H1 (cell line): ENCODE measurements at regions of chr6 and their contacts with region 1.

Region 1: GRCh38 chr6:144265390-144265789 is 19.7 kb upstream of the UTRN start:
- DNase-seq: no peak
- H3K4me3 ChIP-seq: peak overlapping the region in 1 of 4 experiments; percentile 49; a peak in 3 of 8 replicates
- H3K27ac ChIP-seq: no peak overlapping the region
- H3K4me1 ChIP-seq: peaks cover 0 to 14% (median 10%) of the 10 kb centered on the region in 4 experiments; a peak in 4 of 7 replicates
- H3K27me3 ChIP-seq: no peaks in the 10 kb centered on the region
- CTCF ChIP-seq: no peak
- EP300 ChIP-seq: no peak
- POLR2A ChIP-seq: no peak
- RAD21 ChIP-seq: 0 out of 4 replicates have a peak, but pooled peaks of 1 of the 2 experiments have one; percentile 0

Region 2: DNA sequence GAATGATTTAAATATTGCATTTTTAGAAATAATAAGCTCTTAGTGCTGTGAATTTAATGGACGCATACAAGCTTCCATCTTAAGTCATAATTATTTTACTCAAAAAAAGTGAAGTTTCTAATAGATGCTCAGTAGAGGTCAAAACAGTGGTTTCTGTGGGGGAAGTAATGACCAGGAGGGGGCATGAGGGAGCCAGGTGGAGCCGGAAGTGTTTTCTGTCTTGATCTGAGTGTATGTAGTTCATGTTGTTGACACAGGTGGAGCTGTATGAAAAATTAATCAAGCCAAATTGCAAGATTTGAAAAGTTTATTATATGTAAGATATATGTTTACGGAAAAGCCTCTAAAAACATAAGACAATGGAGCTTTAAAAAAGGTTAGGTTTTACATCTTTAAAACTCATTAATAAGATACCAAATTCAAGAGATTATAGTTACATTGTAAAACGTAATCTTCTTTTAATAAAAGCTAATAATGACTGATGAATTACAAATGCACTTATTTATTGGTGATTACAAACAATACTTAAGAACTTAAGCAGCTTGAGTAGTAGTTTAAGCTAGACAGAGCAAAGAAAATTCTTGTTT is 325.3 kb before region 1 on chr6:
- CTCF ChIA-PET with region 1: no interaction called
- POLR2A ChIA-PET with region 1: no interaction called
- DNase-seq: no peak
- H3K4me3 ChIP-seq: no peak overlapping the region
- H3K27ac ChIP-seq: no peak overlapping the region
- H3K4me1 ChIP-seq: peaks cover 2 to 18% (median 9%) of the 10 kb centered on the region in 4 experiments; a peak in 5 of 7 replicates
- H3K27me3 ChIP-seq: no peaks in the 10 kb centered on the region; a peak in 1 of 7 replicates
- CTCF ChIP-seq: peak; percentile 70 to 98 (median 79)
- EP300 ChIP-seq: no peak
- POLR2A ChIP-seq: no peak
- RAD21 ChIP-seq: peak; percentile 68 to 77

Region 3: DNA sequence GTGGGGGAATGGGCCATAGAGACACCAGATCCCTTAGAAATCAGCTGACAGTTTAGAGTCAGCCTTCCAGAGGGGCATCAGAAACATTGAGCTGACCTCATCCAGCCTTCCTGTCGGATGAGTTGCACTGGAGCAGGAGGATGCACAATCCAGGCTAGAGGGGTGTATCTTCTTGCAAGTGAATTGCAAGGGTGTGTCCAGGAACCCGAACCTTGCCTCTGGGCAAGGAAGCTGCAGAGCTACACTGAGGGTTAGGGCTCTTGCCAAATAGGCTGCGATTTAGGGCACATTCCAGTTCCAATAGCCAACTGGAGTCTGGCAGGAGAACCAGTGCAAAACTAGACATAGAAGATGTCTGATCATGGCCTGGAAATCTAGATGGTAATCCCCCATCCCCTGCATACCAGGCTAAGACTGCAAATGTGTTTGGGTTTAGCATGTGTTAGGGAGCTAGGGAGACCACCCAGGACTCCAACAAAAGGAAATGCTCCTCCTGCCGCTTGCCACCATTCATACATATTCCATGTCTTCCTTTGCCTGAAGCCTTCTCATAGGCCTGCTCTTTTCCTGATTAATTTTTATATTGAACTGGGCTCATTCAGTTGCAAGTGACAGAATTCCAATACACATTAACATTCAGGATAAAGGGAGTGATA is 13.4 kb after region 1 on chr6:
- CTCF ChIA-PET with region 1: interaction called, 12 read pairs
- POLR2A ChIA-PET with region 1: interaction called, 5 read pairs
- DNase-seq: no peak
- H3K4me3 ChIP-seq: no peak overlapping the region
- H3K27ac ChIP-seq: no peak overlapping the region
- H3K4me1 ChIP-seq: peaks cover 4 to 15% (median 8%) of the 10 kb centered on the region in 4 experiments; a peak in 6 of 7 replicates
- H3K27me3 ChIP-seq: no peaks in the 10 kb centered on the region
- CTCF ChIP-seq: no peak
- EP300 ChIP-seq: no peak
- POLR2A ChIP-seq: no peak
- RAD21 ChIP-seq: no peak

Region 4: GRCh38 chr6:144311361-144311760 is 46.0 kb after region 1 on chr6:
- CTCF ChIA-PET with region 1: no interaction called
- POLR2A ChIA-PET with region 1: no interaction called
- DNase-seq: no peak
- H3K4me3 ChIP-seq: no peak overlapping the region
- H3K27ac ChIP-seq: no peak overlapping the region
- H3K4me1 ChIP-seq: peaks cover 0 to 3% (median 0%) of the 10 kb centered on the region in 4 experiments; a peak in 1 of 7 replicates
- H3K27me3 ChIP-seq: no peaks in the 10 kb centered on the region
- CTCF ChIP-seq: no peak
- EP300 ChIP-seq: no peak
- POLR2A ChIP-seq: no peak
- RAD21 ChIP-seq: no peak

Region 5: GRCh38 chr6:145051661-145052060 is 786.3 kb after region 1 on chr6:
- CTCF ChIA-PET with region 1: no interaction called
- POLR2A ChIA-PET with region 1: no interaction called
- DNase-seq: no peak
- H3K4me3 ChIP-seq: no peak overlapping the region
- H3K27ac ChIP-seq: no peak overlapping the region
- H3K4me1 ChIP-seq: no peaks in the 10 kb centered on the region
- H3K27me3 ChIP-seq: no peaks in the 10 kb centered on the region
- CTCF ChIP-seq: no peak
- EP300 ChIP-seq: no peak
- POLR2A ChIP-seq: no peak
- RAD21 ChIP-seq: no peak